Activated CD4-positive, alpha-beta T cell treated with anti-CD3 and anti-CD28 coated beads, Interleukin-2, amount 10 ng/mL, durations not matched to agents 7 days and 5 days (primary cell): ENCODE measurements at regions of chr3 and their contacts with region 1.

Region 1: DNA sequence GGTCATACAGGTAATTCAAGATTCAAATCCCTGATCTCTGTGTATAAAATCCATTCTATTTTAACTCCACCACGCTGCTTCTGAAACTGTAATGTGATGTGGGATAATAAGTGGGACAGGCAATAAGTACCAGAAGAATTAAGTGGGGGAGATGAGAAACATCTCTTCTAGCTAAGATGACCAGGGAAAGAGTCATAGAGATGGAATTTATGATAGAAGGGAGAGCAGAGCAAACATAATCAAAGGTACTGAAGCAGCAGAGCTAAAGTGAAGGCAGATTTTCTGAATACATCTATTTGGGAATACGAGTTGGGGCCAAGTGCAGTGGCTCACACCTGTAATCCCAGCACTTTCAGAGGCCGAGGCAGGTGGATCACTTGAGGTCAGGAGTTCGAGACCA is 4.9 kb downstream of the MRPL47 start:
- DNase-seq: no peak
- H3K4me3 Mint-ChIP-seq: no peak overlapping the region
- H3K27ac Mint-ChIP-seq: no peak overlapping the region
- H3K4me1 Mint-ChIP-seq: peaks cover 14% of the 10 kb centered on the region
- H3K27me3 Mint-ChIP-seq: no peaks in the 10 kb centered on the region

Region 2: GRCh38 chr3:179589143-179589542 is 10.4 kb before region 1 on chr3:
- CTCF ChIA-PET with region 1: interaction called, 4 read pairs
- POLR2A ChIA-PET with region 1: interaction called, 12 read pairs
- DNase-seq: no peak
- H3K4me3 Mint-ChIP-seq: no peak overlapping the region
- H3K27ac Mint-ChIP-seq: no peak overlapping the region
- H3K4me1 Mint-ChIP-seq: no peaks in the 10 kb centered on the region
- H3K27me3 Mint-ChIP-seq: no peaks in the 10 kb centered on the region